ENCODE measurements at regions of chr19 and their contacts with region 1.

Region 1: DNA sequence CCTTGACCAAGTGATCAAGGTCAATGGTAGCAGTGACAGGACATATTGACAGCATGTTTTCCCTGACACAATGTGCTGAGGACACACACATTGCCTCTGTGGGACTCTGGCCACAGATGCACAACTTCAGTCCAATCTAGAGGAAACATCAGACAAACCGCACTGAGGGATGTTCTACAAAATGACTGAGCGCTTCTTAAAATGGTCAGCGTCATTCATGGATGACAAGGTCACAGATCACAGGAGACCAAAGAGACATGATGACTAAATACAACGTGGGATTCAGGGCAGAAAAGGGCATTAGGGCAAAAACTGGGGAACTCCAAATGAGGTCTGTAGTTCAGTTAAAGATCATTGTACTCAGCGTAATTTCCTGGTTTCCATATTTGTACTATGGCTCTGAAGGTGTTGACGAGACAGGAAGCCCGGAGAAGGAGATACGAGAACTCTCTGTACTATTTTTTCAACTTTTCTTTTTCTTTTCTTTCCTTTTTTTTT is 20.6 kb downstream of the PBX4 start:
- DNase-seq: peak; percentile 78
- H3K4me3 Mint-ChIP-seq: peak overlapping the region; percentile 75
- H3K27ac Mint-ChIP-seq: peak overlapping the region; percentile 100
- H3K4me1 Mint-ChIP-seq: peaks cover 85% of the 10 kb centered on the region
- H3K27me3 Mint-ChIP-seq: no peaks in the 10 kb centered on the region

Region 2: DNA sequence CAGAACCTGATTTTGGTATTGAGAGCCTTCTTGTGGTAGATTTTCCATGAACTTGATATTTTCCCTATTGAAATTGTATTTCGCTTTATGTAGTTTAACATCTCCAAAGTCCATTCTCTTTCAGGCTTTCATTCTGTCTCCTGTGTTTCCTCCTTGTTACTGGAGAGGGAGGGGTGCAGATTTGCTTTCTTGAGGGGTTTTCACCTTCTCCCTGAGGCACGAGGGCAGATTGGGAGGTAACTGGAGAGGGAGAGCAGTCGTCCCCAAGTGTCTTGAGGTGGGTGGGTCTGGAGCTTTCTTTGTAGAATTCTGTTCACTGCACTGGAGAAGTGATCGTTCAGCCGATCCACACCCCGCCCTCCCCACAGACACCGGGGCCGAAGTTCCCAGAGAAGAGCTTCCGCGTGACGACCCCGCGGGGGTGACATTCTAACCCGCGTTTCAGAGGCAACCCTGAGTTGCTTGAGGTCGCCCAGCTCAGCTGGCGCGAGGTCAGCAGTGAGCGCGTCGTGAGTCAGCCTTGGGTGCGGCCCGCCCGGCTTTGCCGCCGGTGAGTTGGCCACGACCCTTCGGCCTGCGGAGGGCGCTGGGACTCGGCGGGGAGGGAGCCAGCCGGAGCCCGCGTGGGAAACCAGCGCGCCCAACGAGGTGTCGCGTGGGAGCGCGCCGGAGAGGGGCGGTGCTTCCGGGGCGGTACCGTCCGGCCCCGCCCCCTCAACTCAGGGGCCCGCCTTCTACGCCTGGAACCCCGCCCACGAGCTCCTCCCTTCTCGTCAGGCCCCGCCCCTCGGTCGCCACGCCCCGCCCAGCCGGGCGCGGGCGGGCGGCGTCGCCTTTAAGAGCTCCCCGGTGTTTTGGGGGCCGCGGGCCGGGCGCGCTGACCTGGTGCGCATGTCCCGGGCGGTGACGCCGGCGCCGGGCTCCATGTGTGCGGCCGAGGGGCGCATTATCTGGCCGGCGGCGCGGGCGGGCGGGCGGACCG is 192.7 kb before region 1 on chr19 and contains the start of gene GATAD2A:
- CTCF ChIA-PET with region 1: no interaction called
- intact Hi-C with region 1: loop called (anchors 2 kb)
- DNase-seq: peak; percentile 88
- H3K4me3 Mint-ChIP-seq: peak within 1 kb of the TSS; percentile 86
- H3K27ac Mint-ChIP-seq: peak within 1 kb of the TSS; percentile 91
- H3K4me1 Mint-ChIP-seq: peaks cover 63% of the 10 kb centered on the region
- H3K27me3 Mint-ChIP-seq: no peaks in the 10 kb centered on the region
- total RNA-seq, gene GATAD2A: 91.2 to 100 TPM

Region 3: DNA sequence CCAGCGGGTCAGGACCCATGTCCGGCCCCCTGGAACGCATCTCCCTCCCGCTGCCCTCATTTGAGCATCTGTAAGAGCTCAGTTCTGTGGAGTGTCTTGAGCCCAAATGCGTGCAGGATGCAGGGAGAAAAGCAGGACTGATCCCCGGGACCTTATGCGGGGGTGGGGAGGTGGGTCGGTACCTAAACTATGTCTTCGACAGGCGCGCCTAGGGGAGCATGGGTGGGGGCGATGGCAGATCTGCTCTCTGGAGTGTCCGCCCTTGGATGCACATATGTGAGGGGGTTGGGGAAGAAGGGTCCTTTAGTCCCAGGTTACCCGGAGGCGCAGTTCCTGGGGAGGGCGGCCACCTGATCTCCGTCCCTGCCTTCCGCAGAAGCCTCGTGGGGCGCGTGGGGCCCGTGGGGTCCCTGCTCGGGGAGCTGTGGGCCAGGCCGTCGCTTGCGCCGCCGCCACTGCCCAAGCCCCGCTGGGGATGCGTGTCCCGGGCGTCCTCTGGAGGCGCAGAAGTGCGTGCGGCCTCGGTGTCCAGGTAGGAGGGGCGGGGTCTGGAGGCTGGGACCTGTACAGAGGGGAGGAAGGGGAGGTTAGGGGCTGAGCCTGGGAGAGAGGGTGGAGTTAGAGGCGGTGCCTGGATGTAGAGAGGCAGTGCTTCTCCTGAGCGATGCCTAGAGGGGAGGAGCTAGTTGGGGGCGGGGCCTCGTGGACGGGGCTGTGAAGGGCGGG is 57.0 kb before region 1 on chr19:
- CTCF ChIA-PET with region 1: no interaction called
- intact Hi-C with region 1: loop called (anchors 1 kb)
- DNase-seq: peak; percentile 87
- H3K4me3 Mint-ChIP-seq: peak overlapping the region; percentile 62
- H3K27ac Mint-ChIP-seq: no peak overlapping the region
- H3K4me1 Mint-ChIP-seq: peaks cover 33% of the 10 kb centered on the region
- H3K27me3 Mint-ChIP-seq: peaks cover 8% of the 10 kb centered on the region

Region 4: DNA sequence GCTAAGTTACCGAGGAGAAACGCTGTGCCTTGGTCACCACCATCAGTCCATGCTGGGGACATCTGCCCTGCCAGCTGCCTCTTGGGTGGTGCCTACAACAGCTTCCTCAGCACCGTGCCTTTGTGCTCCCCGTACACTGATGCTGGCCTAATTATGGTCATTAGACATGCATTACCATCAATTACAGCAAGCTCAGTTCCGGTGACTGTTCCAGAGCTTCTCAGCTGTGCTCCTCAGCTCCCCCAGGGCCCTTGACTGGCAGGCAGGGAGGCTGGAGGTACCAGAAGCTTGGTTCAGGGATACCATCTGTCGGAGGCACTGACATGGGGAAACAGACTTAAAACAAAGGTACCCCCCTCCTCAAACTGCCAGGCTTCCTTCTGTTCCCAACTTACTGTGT is 19.6 kb before region 1 on chr19:
- CTCF ChIA-PET with region 1: no interaction called
- intact Hi-C with region 1: no loop called
- DNase-seq: no peak
- H3K4me3 Mint-ChIP-seq: no peak overlapping the region
- H3K27ac Mint-ChIP-seq: no peak overlapping the region
- H3K4me1 Mint-ChIP-seq: peaks cover 17% of the 10 kb centered on the region
- H3K27me3 Mint-ChIP-seq: no peaks in the 10 kb centered on the region

Region 5: DNA sequence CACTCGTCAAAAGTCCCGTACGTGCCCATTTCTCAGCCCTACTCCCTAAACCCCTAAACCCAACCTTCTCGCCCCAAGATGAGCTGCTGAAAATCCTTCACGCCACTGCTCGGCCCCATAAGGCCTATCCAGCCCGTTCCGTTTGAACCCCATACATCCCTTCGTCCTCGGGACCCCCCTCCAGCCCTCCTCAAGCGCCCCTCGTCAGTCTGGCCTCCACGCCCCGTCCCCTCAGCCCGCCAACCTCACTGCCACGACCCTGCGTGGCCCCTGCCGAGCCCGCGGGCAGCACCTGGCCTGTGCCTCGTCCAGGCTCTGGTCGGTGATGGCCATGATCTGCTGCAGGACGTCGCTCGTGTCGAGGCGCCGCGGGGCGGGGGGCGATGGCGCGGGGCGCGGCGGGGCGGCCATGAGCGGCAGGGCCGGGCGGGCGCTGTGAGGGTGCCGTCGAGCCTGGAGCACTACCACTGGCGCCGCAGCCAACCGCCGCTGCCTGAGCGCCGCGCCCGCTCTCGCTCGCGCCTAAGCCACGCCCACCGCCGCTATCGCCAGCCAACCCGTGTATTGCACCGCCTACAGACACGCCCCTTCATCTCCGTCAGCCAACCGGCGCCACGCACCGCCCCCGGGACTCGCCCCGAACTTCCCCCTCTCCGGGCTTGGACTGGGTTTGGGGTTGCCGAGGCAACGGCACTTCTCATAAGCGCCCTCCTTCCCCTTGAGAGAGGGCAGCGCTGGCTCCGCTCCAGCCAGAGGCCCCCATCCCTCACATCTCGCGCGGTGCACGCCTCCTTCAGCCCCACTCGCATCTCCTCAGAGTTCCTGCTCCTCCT is 20.6 kb after region 1 on chr19 and contains the start of gene PBX4:
- CTCF ChIA-PET with region 1: interaction called, 8 read pairs
- intact Hi-C with region 1: loop called (anchors 1 kb)
- DNase-seq: peak; percentile 99
- H3K4me3 Mint-ChIP-seq: peak within 1 kb of the TSS; percentile 81
- H3K27ac Mint-ChIP-seq: peak within 1 kb of the TSS; percentile 46
- H3K4me1 Mint-ChIP-seq: peaks cover 43% of the 10 kb centered on the region
- H3K27me3 Mint-ChIP-seq: no peaks in the 10 kb centered on the region
- total RNA-seq, gene PBX4: 13.5 to 17.5 TPM

Region 6: DNA sequence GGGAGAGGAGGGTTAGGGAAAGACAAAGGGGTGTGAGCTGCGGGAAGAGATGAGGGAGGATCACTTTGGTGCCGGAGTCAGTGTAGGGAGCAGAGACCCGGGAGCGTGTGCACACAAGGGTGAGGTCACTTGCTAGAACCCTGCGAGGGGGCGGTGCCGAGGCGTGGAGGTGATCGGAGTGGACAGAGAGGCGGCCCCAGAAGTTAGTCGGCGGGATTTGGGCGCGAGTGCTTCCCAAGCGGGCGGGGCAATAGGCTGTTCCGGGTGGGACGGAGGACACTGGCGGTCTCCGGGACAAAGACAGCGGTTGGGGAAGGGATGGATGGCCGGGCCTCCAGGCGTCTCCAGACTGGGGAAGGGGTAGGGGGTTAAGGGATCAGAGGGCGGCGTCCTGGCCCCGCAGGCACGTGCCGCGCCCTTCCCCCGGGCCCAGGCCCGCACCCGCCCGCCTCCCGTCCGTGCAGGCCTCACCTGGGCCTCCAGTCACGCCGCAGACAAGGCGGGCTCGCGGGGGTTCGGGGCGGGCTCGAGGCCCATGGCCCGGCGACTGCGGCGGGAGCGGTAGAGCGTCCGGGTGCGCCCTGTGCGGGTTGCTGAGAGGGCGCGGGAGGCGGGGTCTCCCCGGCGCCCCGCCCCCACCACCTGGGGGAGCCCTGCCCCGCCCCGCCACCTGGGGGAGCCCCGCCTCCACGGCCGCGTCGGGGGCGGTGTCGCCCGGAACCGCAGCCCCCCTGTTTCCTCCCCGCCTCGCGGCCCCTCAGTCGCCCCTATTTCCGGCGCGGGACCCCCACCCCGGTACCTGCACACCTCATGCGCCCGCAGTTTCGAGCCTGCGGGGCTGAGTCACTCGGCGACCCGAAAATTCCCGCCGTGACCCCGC is 30.0 kb after region 1 on chr19 and contains the start of gene LPAR2:
- CTCF ChIA-PET with region 1: no interaction called
- intact Hi-C with region 1: loop called (anchors 2 kb)
- DNase-seq: peak; percentile 65
- H3K4me3 Mint-ChIP-seq: peak within 1 kb of the TSS; percentile 89
- H3K27ac Mint-ChIP-seq: peak within 1 kb of the TSS; percentile 85
- H3K4me1 Mint-ChIP-seq: peaks cover 29% of the 10 kb centered on the region
- H3K27me3 Mint-ChIP-seq: no peaks in the 10 kb centered on the region
- total RNA-seq, gene LPAR2: 20.2 to 20.7 TPM

Region 7: DNA sequence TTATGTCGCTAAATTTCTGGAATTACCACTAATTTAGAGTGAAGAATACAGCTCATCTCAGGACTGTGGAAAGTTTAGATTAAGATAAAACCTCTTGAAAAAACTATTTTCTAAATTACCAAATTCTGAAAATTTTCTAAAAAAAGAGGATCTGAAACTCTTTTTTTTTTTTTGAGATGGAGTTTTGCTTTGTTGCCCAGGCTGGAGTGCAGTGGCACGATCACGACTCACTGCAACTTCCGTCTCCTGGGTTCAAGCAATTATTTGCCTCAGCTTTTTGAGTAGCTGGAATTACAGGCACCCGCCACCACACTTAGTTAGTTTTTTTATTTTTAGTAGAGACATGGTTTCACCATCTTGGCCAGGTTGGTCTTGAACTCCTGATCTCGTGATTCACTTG is 251.2 kb after region 1 on chr19:
- CTCF ChIA-PET with region 1: no interaction called
- intact Hi-C with region 1: no loop called
- DNase-seq: no peak
- H3K4me3 Mint-ChIP-seq: no peak overlapping the region
- H3K27ac Mint-ChIP-seq: no peak overlapping the region
- H3K4me1 Mint-ChIP-seq: no peaks in the 10 kb centered on the region
- H3K27me3 Mint-ChIP-seq: no peaks in the 10 kb centered on the region

Region 8: GRCh38 chr19:19865739-19866481 is 268.1 kb after region 1 on chr19 and contains the start of gene ZNF253:
- CTCF ChIA-PET with region 1: no interaction called
- intact Hi-C with region 1: loop called (anchors 5 kb)
- DNase-seq: peak; percentile 99
- H3K4me3 Mint-ChIP-seq: peak within 1 kb of the TSS; percentile 100
- H3K27ac Mint-ChIP-seq: peak within 1 kb of the TSS; percentile 99
- H3K4me1 Mint-ChIP-seq: peaks cover 26% of the 10 kb centered on the region
- H3K27me3 Mint-ChIP-seq: no peaks in the 10 kb centered on the region
- total RNA-seq, gene ZNF253: 6.1 to 9.6 TPM